GM10248 (cell line): ENCODE measurements at regions of chr5 and their contacts with region 1.

Region 1: DNA sequence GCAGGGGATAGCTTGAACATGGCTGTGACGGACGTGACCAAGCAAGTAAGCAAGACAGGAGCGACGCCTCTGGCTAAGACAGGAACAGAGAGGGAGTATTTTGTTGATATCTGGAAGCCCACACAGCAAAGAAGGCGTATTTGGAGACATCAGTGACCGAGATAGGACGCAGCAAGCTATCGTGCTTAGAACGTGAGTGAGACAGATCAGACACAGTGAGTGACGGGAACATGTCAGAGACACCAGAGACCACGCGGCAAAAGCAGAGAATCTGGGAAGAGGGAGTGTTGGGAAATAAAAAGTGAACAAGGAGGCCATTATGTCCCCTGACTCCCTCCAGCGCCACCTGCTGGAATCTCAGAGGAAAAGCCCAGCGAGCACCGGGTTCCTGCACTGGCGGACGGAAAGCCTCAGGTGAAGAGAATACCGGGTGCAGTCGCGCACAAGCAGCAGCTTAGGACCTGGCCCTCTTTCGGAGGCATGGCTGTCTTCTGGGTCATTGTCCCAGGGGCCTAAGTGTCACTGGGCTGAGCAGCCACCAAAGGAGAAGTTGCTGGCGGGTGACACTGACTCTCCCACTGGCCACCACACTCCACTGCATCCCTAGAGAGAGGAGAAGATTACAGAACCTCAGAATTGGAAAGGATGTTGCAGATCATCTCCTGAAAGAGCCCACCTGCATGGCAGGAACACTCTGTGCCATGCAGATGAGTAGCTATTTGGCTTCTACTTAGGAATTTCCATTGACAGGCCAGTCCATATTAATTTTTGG is 99.1 kb downstream of the FBXO38 start:
- DNase-seq: peak; percentile 53
- CTCF ChIP-seq: peak; percentile 84

Region 2: GRCh38 chr5:148469501-148469935 is 13.4 kb before region 1 on chr5:
- CTCF ChIA-PET with region 1: interaction called, 13 read pairs
- POLR2A ChIA-PET with region 1: no interaction called
- DNase-seq: no peak
- CTCF ChIP-seq: no peak